ENCODE measurements at regions of chr2 and their contacts with region 1.

Region 1: DNA sequence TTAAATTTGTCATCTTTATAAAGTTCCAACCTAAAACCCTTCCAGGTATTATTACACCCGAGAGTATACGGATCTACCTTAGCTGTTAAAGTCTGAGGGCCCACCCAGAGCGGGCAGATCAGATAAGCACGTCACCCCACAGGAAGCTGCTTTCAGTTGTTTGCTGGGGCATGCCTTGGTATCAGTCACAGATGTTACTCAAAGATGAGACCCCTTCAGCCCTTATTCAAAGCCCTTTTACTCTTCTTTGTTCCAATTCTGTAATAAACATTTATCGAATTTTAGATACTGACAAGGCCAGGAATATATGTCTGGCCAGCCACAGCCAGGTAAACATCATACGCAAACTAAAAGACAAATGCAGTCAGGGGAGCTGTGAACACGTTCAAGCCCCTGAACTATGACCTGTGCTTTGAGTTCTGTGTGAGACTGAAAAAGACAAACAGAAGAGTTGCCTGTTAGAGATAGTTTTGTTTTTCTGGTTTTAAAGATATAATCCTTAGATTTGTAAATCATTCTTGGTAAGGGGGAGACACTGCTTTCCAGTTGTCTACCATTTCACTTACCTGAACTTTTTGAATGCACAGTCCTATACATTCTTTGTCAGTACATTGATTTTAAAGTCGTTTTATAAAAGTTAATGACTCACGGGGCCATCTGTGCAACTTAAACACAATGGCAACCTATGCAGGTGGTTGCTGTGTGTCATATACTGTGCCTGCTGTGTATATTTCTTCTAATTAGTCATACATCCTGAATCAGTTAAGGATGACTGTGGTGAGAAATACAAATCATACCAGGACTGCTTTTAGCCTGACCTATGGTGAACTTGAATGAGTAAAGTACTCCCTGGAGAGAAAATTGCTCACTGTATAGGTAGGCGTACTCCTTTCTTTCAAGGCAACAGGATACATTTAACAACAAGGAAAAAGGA is 100.5 kb upstream of the ITPRID2 start:
- DNase-seq: peak; percentile 55
- H3K4me3 Mint-ChIP-seq: no peak overlapping the region
- H3K27ac Mint-ChIP-seq: no peak overlapping the region
- H3K4me1 Mint-ChIP-seq: peaks cover 19% of the 10 kb centered on the region
- H3K27me3 Mint-ChIP-seq: peaks cover 12% of the 10 kb centered on the region

Region 2: DNA sequence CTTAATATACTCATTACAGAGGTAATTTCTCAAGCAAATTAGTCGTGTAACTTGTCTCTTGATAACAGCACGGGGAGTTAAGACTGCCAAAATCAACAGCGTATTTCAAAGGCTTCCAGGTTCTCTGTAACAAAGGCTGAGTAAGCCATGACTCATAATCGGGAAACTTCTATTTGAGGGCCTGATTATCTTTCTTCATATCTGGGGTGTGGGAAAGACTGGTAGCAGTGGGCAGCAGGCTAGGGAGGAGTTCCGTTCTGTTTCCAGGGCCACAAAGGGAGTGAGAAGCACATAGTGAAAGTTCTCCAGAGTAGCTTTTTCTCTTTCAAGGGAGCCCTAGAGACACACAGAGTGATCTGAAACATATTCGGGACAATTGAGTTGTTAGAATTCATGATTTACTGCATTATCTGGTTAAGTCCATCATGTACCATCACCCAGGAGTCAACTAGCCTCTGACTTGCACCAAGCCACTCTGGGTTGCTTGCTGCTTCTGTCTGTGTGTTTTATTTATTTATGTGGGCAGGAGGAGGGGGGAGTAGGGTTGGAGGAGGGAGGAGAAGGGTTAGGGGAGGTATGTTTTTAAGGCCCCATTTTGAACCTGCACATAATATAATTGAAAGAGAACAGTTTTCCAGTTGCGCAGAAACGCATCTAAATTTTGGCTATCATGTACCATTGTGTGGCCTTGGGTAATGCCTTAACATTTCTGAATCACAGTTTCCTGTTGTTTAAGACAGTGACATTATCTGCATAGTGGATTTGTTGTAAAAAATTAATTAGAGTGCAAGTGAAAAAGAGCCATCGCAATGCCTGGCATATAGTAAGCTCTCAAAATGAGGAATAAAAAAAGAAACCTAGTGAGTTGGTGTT is 20.1 kb after region 1 on chr2:
- CTCF ChIA-PET with region 1: interaction called, 3 read pairs
- intact Hi-C with region 1: loop called (anchors 2 kb)
- DNase-seq: no peak
- H3K4me3 Mint-ChIP-seq: no peak overlapping the region
- H3K27ac Mint-ChIP-seq: no peak overlapping the region
- H3K4me1 Mint-ChIP-seq: peaks cover 7% of the 10 kb centered on the region
- H3K27me3 Mint-ChIP-seq: peaks cover 4% of the 10 kb centered on the region

Region 3: DNA sequence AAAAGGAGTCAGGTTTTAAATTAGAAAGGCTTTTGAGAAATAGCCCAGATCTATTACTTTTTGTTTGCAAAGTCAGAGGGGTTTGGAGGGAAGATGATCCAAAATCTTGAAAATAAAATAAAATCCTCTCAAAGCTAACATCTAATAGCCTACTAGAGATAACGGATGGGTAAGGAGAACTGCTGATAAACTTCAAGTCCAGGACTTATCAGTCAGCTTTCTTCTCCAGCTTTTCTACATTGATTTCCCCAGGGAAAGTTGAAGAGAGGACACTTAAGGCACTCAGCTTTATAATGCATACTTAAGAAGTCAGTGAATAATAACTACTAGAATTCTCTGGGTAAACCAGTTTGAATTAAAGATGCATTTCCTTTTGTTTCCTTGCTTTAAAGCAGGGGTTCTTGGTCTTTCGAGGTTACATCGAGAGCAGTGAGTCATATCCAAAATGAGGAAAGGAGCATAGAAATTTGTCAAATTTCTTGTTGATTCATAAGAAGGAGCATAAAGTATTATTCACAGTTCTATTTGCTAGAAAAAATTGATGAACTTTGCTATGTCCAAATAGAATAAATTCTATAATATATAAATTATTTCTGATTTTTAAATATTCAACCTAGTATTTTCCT is 57.4 kb after region 1 on chr2:
- CTCF ChIA-PET with region 1: interaction called, 4 read pairs
- intact Hi-C with region 1: loop called (anchors 2 kb)
- DNase-seq: no peak
- H3K4me3 Mint-ChIP-seq: no peak overlapping the region
- H3K27ac Mint-ChIP-seq: no peak overlapping the region
- H3K4me1 Mint-ChIP-seq: peaks cover 3% of the 10 kb centered on the region
- H3K27me3 Mint-ChIP-seq: peaks cover 8% of the 10 kb centered on the region

Region 4: DNA sequence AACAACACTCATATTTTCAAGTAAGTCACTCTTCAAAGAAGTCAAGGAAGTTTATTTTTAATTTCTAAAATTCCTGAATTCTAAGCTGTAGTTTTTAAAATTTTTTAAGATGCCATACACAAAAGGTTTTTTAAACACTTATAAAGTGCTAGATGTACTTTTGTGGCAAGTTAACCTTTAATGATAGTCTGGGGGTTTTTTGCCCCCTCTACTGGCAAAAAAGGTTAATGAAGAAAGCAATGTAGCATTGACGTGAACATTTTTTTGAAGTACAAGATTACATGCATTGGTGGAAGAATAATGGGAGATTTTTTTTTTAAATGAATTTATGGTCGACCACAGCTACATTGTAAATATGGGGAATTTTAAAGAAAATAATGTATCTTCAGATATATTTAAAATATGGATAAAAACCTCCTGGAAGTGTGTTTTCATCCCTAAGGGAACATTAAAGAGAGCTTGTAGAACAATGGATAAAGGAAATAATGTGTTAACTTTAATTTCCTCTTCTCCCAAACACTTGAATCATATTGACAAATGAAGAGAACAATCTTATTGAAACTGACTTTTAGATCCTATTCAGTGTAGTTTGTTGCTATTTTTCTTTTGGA is 113.1 kb after region 1 on chr2:
- CTCF ChIA-PET with region 1: no interaction called
- intact Hi-C with region 1: loop called (anchors 1 kb)
- DNase-seq: no peak
- H3K4me3 Mint-ChIP-seq: no peak overlapping the region
- H3K27ac Mint-ChIP-seq: no peak overlapping the region
- H3K4me1 Mint-ChIP-seq: peaks cover 23% of the 10 kb centered on the region
- H3K27me3 Mint-ChIP-seq: no peaks in the 10 kb centered on the region

Region 5: GRCh38 chr2:181953881-181954537 is 163.0 kb after region 1 on chr2:
- CTCF ChIA-PET with region 1: no interaction called
- intact Hi-C with region 1: loop called (anchors 1 kb)
- DNase-seq: peak; percentile 82
- H3K4me3 Mint-ChIP-seq: peak overlapping the region; percentile 17
- H3K27ac Mint-ChIP-seq: no peak overlapping the region
- H3K4me1 Mint-ChIP-seq: peaks cover 9% of the 10 kb centered on the region
- H3K27me3 Mint-ChIP-seq: peaks cover 19% of the 10 kb centered on the region

Measured in activated naive CD4-positive, alpha-beta T cell treated with anti-CD3 and anti-CD28 coated beads for 36 hours (primary cell).